Naive thymus-derived CD4-positive, alpha-beta T cell (primary cell): ENCODE measurements at regions of chr7 and their contacts with region 1.

Region 1: GRCh38 chr7:41940760-41941343 is 238.0 kb upstream of the INHBA start:
- DNase-seq: peak in 8 of 9 donors; percentile 14 to 53 (median 36)
- ATAC-seq: peak; percentile 77
- H3K4me3 ChIP-seq: no peak overlapping the region
- H3K4me3 Mint-ChIP-seq: peak overlapping the region in 1 of 10 donors; percentile 23
- H3K27ac ChIP-seq: no peak overlapping the region
- H3K27ac Mint-ChIP-seq: no peak overlapping the region
- H3K4me1 ChIP-seq: no peaks in the 10 kb centered on the region
- H3K4me1 Mint-ChIP-seq: peaks cover 0 to 13% (median 7%) of the 10 kb centered on the region in 7 donors
- H3K27me3 ChIP-seq: no peaks in the 10 kb centered on the region
- H3K27me3 Mint-ChIP-seq: peaks cover 17 to 40% (median 23%) of the 10 kb centered on the region in 5 donors

Region 2: GRCh38 chr7:40232242-40232893 is 1708.5 kb before region 1 on chr7:
- CTCF ChIA-PET with region 1: no interaction called
- POLR2A ChIA-PET with region 1: no interaction called
- intact Hi-C with region 1: loop called in 1 of 2 experiments (anchors 5 kb)
- DNase-seq: peak in 3 of 9 donors; percentile 3 to 12 (median 11)
- ATAC-seq: peak; percentile 40
- H3K4me3 ChIP-seq: no peak overlapping the region
- H3K4me3 Mint-ChIP-seq: no peak overlapping the region
- H3K27ac ChIP-seq: no peak overlapping the region
- H3K27ac Mint-ChIP-seq: peak overlapping the region in 1 of 9 donors; percentile 7
- H3K4me1 ChIP-seq: peaks cover 0 to 4% of the 10 kb centered on the region in 2 donors
- H3K4me1 Mint-ChIP-seq: peaks cover 0 to 19% (median 6%) of the 10 kb centered on the region in 7 donors
- H3K27me3 ChIP-seq: no peaks in the 10 kb centered on the region
- H3K27me3 Mint-ChIP-seq: no peaks in the 10 kb centered on the region

Region 3: GRCh38 chr7:40516376-40516775 is 1424.5 kb before region 1 on chr7:
- CTCF ChIA-PET with region 1: no interaction called
- POLR2A ChIA-PET with region 1: no interaction called
- intact Hi-C with region 1: no loop called
- DNase-seq: no peak
- ATAC-seq: no peak
- H3K4me3 ChIP-seq: no peak overlapping the region
- H3K4me3 Mint-ChIP-seq: no peak overlapping the region
- H3K27ac ChIP-seq: no peak overlapping the region
- H3K27ac Mint-ChIP-seq: no peak overlapping the region
- H3K4me1 ChIP-seq: no peaks in the 10 kb centered on the region
- H3K4me1 Mint-ChIP-seq: no peaks in the 10 kb centered on the region
- H3K27me3 ChIP-seq: no peaks in the 10 kb centered on the region
- H3K27me3 Mint-ChIP-seq: peaks cover 0 to 2% (median 0%) of the 10 kb centered on the region in 5 donors

Region 4: GRCh38 chr7:41881331-41882130 is 59.3 kb before region 1 on chr7:
- CTCF ChIA-PET with region 1: no interaction called
- POLR2A ChIA-PET with region 1: no interaction called
- intact Hi-C with region 1: loop called in 1 of 2 experiments (anchors 2 kb)
- DNase-seq: peak; percentile 27 to 85 (median 64)
- ATAC-seq: peak; percentile 93
- H3K4me3 ChIP-seq: peak overlapping the region; percentile 50
- H3K4me3 Mint-ChIP-seq: peak overlapping the region; percentile 60 to 89 (median 78)
- H3K27ac ChIP-seq: peak overlapping the region; percentile 64
- H3K27ac Mint-ChIP-seq: peak overlapping the region; percentile 84 to 99 (median 94)
- H3K4me1 ChIP-seq: peaks cover 7 to 13% of the 10 kb centered on the region in 2 donors
- H3K4me1 Mint-ChIP-seq: peaks cover 10 to 35% (median 22%) of the 10 kb centered on the region in 7 donors
- H3K27me3 ChIP-seq: no peaks in the 10 kb centered on the region
- H3K27me3 Mint-ChIP-seq: peaks cover 0 to 6% (median 0%) of the 10 kb centered on the region in 5 donors

Region 5: GRCh38 chr7:42843205-42843800 is 902.5 kb after region 1 on chr7:
- CTCF ChIA-PET with region 1: no interaction called
- POLR2A ChIA-PET with region 1: no interaction called
- intact Hi-C with region 1: loop called in 1 of 2 experiments (anchors 2 kb)
- DNase-seq: no peak
- ATAC-seq: no peak
- H3K4me3 ChIP-seq: no peak overlapping the region
- H3K4me3 Mint-ChIP-seq: no peak overlapping the region
- H3K27ac ChIP-seq: no peak overlapping the region
- H3K27ac Mint-ChIP-seq: no peak overlapping the region
- H3K4me1 ChIP-seq: no peaks in the 10 kb centered on the region
- H3K4me1 Mint-ChIP-seq: no peaks in the 10 kb centered on the region
- H3K27me3 ChIP-seq: no peaks in the 10 kb centered on the region
- H3K27me3 Mint-ChIP-seq: peaks cover 31 to 39% (median 38%) of the 10 kb centered on the region in 5 donors

Region 6: DNA sequence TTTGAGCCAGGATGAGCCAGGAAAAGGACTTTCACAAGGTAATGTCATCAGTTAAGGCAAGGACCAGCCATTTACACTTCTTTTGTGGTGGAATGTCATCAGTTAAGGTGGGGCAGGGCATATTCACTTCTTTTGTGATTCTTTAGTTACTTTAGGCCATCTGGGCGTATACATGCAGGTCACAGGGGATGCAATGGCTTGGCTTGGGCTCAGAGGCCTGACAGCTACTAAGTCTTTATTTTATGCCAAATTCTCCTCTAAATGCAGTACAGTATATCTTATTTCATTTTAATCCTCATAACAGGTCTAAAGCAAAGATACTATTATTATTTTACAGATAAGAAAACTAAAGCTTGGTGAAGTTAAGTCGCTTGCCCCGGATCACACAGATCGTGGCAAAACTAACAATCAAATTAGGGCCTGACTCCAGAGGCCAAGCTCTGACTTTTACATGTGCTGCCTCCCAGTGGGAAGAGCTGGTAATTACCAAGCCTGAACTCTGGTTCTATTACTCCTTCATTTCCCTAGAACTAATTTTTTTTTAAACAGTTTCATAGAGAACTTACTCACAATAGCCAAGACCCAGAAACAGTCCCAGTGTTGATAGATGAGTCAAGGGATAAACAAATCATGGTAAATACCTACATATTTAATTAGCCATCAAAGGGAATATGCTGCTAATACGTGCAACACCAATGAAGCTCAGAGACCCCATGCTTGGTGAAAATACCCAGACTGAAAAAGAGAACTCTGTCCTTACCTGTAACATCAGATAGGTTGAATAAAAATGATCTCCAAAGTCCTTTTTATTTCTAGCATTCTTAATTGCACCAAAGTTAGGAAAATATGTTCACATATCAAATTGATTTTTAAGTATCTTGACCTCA is 935.6 kb after region 1 on chr7:
- CTCF ChIA-PET with region 1: interaction called, 6 read pairs
- POLR2A ChIA-PET with region 1: no interaction called
- intact Hi-C with region 1: loop called in 1 of 2 experiments (anchors 1 kb)
- DNase-seq: peak in 8 of 9 donors; percentile 10 to 57 (median 32)
- ATAC-seq: peak; percentile 80
- H3K4me3 ChIP-seq: no peak overlapping the region
- H3K4me3 Mint-ChIP-seq: no peak overlapping the region
- H3K27ac ChIP-seq: no peak overlapping the region
- H3K27ac Mint-ChIP-seq: no peak overlapping the region
- H3K4me1 ChIP-seq: no peaks in the 10 kb centered on the region
- H3K4me1 Mint-ChIP-seq: peaks cover 0 to 3% (median 0%) of the 10 kb centered on the region in 7 donors
- H3K27me3 ChIP-seq: no peaks in the 10 kb centered on the region
- H3K27me3 Mint-ChIP-seq: peaks cover 0 to 11% (median 0%) of the 10 kb centered on the region in 5 donors

Region 7: GRCh38 chr7:43439631-43440401 is 1499.0 kb after region 1 on chr7:
- CTCF ChIA-PET with region 1: no interaction called
- POLR2A ChIA-PET with region 1: no interaction called
- intact Hi-C with region 1: loop called in 1 of 2 experiments (anchors 2 kb)
- DNase-seq: peak in 6 of 9 donors; percentile 3 to 65 (median 18)
- ATAC-seq: peak; percentile 76
- H3K4me3 ChIP-seq: no peak overlapping the region
- H3K4me3 Mint-ChIP-seq: no peak overlapping the region
- H3K27ac ChIP-seq: no peak overlapping the region
- H3K27ac Mint-ChIP-seq: no peak overlapping the region
- H3K4me1 ChIP-seq: no peaks in the 10 kb centered on the region
- H3K4me1 Mint-ChIP-seq: peaks cover 0 to 4% (median 2%) of the 10 kb centered on the region in 7 donors
- H3K27me3 ChIP-seq: no peaks in the 10 kb centered on the region
- H3K27me3 Mint-ChIP-seq: peaks cover 0 to 7% (median 0%) of the 10 kb centered on the region in 5 donors